ENCODE measurements at regions of chr17 and their contacts with region 1.

Region 1: GRCh38 chr17:39573447-39574298 is 34.0 kb downstream of the NEUROD2 start:
- DNase-seq: peak; percentile 70
- ATAC-seq: peak; percentile 82
- H3K4me3 Mint-ChIP-seq: peak overlapping the region; percentile 79
- H3K27ac Mint-ChIP-seq: peak overlapping the region; percentile 73
- H3K4me1 Mint-ChIP-seq: peaks cover 12% of the 10 kb centered on the region
- H3K27me3 Mint-ChIP-seq: peaks cover 30% of the 10 kb centered on the region
- CTCF ChIP-seq: no peak

Region 2: DNA sequence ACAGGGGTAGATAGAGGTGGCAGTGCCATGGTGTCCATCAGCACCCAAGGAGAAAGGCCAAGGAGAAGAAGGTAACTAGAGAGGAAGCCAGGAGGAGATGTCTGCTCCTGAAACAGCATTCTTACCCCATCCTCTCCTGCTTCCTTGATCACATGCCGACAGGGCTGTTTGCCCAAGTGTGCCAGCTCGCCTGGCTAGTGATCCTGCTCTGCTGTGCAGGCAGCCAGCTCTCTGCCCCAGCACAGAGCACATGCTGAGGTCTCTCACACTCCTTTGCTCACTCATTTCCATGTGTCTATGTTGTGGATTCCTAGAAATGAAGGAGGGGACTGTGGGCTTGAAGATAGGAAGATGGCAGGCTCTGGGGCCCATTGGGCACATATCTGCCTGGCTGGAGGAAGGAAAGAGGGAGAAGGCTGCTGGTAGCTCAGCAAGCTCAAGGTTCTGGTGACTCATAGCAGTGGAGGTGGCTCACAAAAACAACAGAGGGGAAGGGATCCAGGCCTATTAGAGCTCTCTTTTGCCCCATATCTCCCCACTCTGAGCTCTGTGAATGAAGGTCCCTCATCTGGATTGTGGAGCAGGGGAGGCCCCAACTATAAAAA is 20.2 kb before region 1 on chr17:
- CTCF ChIA-PET with region 1: interaction called, 116 read pairs
- POLR2A ChIA-PET with region 1: interaction called, 3 read pairs
- DNase-seq: no peak
- ATAC-seq: no peak
- H3K4me3 Mint-ChIP-seq: no peak overlapping the region
- H3K27ac Mint-ChIP-seq: no peak overlapping the region
- H3K4me1 Mint-ChIP-seq: peaks cover 10% of the 10 kb centered on the region
- H3K27me3 Mint-ChIP-seq: no peaks in the 10 kb centered on the region; the same call in 1 of the 2 replicates
- CTCF ChIP-seq: no peak

Region 3: GRCh38 chr17:39563476-39563875 is 10.2 kb before region 1 on chr17:
- CTCF ChIA-PET with region 1: interaction called, 52 read pairs
- POLR2A ChIA-PET with region 1: no interaction called
- DNase-seq: peak; percentile 46
- ATAC-seq: peak; percentile 59
- H3K4me3 Mint-ChIP-seq: peak overlapping the region; percentile 56
- H3K27ac Mint-ChIP-seq: no peak overlapping the region
- H3K4me1 Mint-ChIP-seq: peaks cover 26% of the 10 kb centered on the region
- H3K27me3 Mint-ChIP-seq: no peaks in the 10 kb centered on the region
- CTCF ChIP-seq: no peak

Region 4: GRCh38 chr17:39591958-39592954 is 18.6 kb after region 1 on chr17:
- CTCF ChIA-PET with region 1: interaction called, 11 read pairs
- POLR2A ChIA-PET with region 1: no interaction called
- DNase-seq: peak; percentile 84
- ATAC-seq: peak; percentile 69
- H3K4me3 Mint-ChIP-seq: peak overlapping the region; percentile 46
- H3K27ac Mint-ChIP-seq: no peak overlapping the region
- H3K4me1 Mint-ChIP-seq: peaks cover 29% of the 10 kb centered on the region
- H3K27me3 Mint-ChIP-seq: peaks cover 77% of the 10 kb centered on the region
- CTCF ChIP-seq: no peak

Region 5: DNA sequence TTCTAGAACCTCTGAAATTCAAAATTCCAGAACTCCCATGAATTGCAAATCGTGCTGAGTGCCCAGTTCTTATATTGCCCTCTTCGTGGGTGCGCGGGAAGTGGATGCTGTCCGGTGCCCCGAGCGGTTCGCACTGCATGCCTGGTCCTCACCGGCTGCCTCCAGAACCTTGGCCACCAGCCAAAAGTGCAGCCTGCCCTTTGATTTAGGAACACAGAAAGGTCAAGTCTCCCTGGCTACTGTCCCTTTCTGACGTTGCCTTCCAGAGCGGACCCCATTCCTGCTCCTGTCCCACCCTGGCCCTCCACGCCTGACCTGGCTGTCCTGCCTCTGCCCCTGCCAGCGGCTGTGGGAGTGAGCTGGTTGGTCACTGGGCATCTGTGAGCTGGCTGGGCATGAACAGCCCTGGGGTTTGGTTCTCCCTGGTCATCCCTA is 24.4 kb after region 1 on chr17:
- CTCF ChIA-PET with region 1: interaction called, 27 read pairs
- POLR2A ChIA-PET with region 1: interaction called, 3 read pairs
- DNase-seq: no peak
- ATAC-seq: no peak
- H3K4me3 Mint-ChIP-seq: peak overlapping the region; percentile 20; the same call in 1 of the 2 replicates
- H3K27ac Mint-ChIP-seq: no peak overlapping the region
- H3K4me1 Mint-ChIP-seq: peaks cover 59% of the 10 kb centered on the region
- H3K27me3 Mint-ChIP-seq: peaks cover 100% of the 10 kb centered on the region
- CTCF ChIP-seq: no peak

Region 6: GRCh38 chr17:39605492-39606433 is 32.1 kb after region 1 on chr17:
- CTCF ChIA-PET with region 1: interaction called, 27 read pairs
- POLR2A ChIA-PET with region 1: interaction called, 4 read pairs
- DNase-seq: peak; percentile 48
- ATAC-seq: peak; percentile 19
- H3K4me3 Mint-ChIP-seq: peak overlapping the region; percentile 60
- H3K27ac Mint-ChIP-seq: no peak overlapping the region
- H3K4me1 Mint-ChIP-seq: peaks cover 45% of the 10 kb centered on the region
- H3K27me3 Mint-ChIP-seq: peaks cover 100% of the 10 kb centered on the region
- CTCF ChIP-seq: no peak

Region 7: GRCh38 chr17:39636927-39637736 is 63.5 kb after region 1 on chr17 and contains the start of gene STARD3:
- CTCF ChIA-PET with region 1: interaction called, 13 read pairs
- POLR2A ChIA-PET with region 1: no interaction called
- DNase-seq: peak; percentile 94
- ATAC-seq: peak; percentile 72
- H3K4me3 Mint-ChIP-seq: peak within 1 kb of the TSS; percentile 76
- H3K27ac Mint-ChIP-seq: peak within 1 kb of the TSS; percentile 64
- H3K4me1 Mint-ChIP-seq: peaks cover 70% of the 10 kb centered on the region
- H3K27me3 Mint-ChIP-seq: no peaks in the 10 kb centered on the region
- CTCF ChIP-seq: no peak
- total RNA-seq, gene STARD3: 64.9 to 75.3 TPM (median 65.4 TPM) in 3 replicates

Region 8: GRCh38 chr17:39822051-39822451 is 248.4 kb after region 1 on chr17:
- CTCF ChIA-PET with region 1: no interaction called
- POLR2A ChIA-PET with region 1: no interaction called
- DNase-seq: no peak
- ATAC-seq: no peak
- H3K4me3 Mint-ChIP-seq: no peak overlapping the region
- H3K27ac Mint-ChIP-seq: no peak overlapping the region
- H3K4me1 Mint-ChIP-seq: 0 out of 2 replicates have a peak, but pooled peaks cover 3% of the 10 kb centered on the region
- H3K27me3 Mint-ChIP-seq: peaks cover 24% of the 10 kb centered on the region
- CTCF ChIP-seq: no peak

Measured in WTC11 (cell line).